Activated naive CD4-positive, alpha-beta T cell treated with anti-CD3 and anti-CD28 coated beads, Interleukin-2, amount 10 ng/mL, durations not matched to agents 7 days and 5 days (primary cell): ENCODE measurements at regions of chr15 and their contacts with region 1.

Region 1: GRCh38 chr15:43204016-43204901 is 16.6 kb downstream of the EPB42 start:
- DNase-seq: peak; percentile 70
- H3K4me3 Mint-ChIP-seq: no peak overlapping the region
- H3K27ac Mint-ChIP-seq: no peak overlapping the region
- H3K4me1 Mint-ChIP-seq: no peaks in the 10 kb centered on the region
- H3K27me3 Mint-ChIP-seq: peaks cover 38% of the 10 kb centered on the region

Region 2: DNA sequence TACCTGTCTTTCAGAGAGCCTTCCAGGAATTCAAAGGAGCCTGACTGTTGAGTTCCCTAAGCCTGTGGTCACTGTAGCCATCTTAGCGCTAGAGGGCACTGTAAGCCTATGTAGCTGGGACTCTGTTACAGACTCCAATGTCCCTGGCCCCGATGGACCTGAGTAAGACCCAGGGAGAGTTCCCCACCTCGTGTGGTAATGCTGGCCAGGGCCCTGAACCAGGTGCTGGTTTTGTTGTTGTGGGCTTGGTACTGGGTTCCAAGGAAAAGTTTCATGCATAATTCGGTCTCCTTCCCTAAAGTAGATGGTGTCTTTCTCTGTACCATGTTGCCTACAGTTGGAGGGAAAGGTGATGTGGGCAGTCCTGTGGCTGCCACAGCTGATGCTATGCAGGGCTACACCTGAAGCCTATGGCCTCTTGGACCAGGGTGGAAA is 499.8 kb before region 1 on chr15:
- CTCF ChIA-PET with region 1: interaction called, 11 read pairs
- DNase-seq: peak; percentile 78
- H3K4me3 Mint-ChIP-seq: no peak overlapping the region
- H3K27ac Mint-ChIP-seq: no peak overlapping the region
- H3K4me1 Mint-ChIP-seq: peaks cover 5% of the 10 kb centered on the region
- H3K27me3 Mint-ChIP-seq: no peaks in the 10 kb centered on the region

Region 3: DNA sequence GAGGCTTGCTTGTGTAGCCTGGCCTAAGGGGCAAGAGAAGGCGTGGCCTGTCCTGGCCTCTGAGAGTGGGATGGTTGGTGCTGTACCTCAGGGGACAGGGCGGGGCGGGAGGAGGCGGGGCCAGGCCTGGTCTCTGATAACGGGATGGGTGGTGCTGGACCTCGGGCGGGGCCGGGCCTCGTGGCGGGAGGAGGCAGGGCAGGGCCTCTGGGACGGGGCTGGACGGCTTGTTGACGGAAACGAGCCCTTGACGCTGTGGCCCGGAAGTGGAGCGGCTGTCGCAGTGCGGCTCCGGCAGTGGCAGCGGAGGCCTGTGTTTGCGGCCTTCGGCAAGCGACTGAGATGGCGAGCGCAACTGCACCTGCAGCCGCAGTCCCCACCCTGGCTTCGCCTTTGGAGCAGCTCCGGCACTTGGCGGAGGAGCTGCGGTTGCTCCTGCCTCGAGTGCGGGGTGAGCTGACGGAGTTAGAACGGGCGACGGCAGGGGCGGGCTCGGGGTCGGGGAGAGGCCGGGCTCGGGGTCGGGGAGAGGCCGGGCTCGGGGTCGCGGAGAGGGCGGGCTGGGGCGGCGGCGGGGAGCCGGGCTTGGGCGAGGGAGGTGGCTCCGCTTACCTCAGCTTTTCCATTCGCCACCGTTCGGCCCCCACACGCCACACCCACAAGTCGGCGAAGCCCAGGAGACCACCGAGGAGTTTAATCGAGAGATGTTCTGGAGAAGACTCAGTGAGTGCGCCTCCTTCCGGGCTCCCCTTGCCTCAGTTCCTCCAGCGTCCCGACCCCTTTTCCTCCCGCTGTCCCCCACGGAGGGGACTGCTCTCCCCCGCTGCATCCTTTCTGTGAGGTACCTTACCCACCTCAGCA is 18.9 kb before region 1 on chr15 and contains the start of gene CCNDBP1:
- CTCF ChIA-PET with region 1: interaction called, 56 read pairs
- DNase-seq: peak; percentile 94
- H3K4me3 Mint-ChIP-seq: peak within 1 kb of the TSS; percentile 97
- H3K27ac Mint-ChIP-seq: peak within 1 kb of the TSS; percentile 96
- H3K4me1 Mint-ChIP-seq: peaks cover 42% of the 10 kb centered on the region
- H3K27me3 Mint-ChIP-seq: no peaks in the 10 kb centered on the region

Region 4: DNA sequence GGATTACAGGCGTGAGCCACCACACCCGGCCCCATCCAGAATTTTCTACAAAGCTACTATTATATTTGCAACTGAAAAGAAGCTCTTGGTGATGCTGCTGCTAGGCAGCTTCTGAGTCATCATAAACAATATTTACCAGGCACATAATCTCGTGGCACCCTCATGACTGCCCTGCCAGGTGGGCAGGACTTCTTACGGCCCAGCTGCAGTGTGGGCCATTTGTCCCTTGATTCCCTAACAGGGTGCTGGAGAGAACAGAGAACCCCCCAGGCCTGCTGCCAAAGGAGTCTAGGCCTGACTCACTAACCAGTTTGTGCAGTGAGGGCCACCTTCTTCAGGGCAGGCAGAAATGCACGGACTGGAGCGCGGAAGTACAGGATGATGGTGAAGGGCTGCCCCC is 11.7 kb after region 1 on chr15:
- CTCF ChIA-PET with region 1: interaction called, 13 read pairs
- DNase-seq: no peak
- H3K4me3 Mint-ChIP-seq: no peak overlapping the region
- H3K27ac Mint-ChIP-seq: no peak overlapping the region
- H3K4me1 Mint-ChIP-seq: no peaks in the 10 kb centered on the region
- H3K27me3 Mint-ChIP-seq: peaks cover 44% of the 10 kb centered on the region